CD4-positive, alpha-beta memory T cell (primary cell): ENCODE measurements at regions of chr18 and their contacts with region 1.

Region 1: DNA sequence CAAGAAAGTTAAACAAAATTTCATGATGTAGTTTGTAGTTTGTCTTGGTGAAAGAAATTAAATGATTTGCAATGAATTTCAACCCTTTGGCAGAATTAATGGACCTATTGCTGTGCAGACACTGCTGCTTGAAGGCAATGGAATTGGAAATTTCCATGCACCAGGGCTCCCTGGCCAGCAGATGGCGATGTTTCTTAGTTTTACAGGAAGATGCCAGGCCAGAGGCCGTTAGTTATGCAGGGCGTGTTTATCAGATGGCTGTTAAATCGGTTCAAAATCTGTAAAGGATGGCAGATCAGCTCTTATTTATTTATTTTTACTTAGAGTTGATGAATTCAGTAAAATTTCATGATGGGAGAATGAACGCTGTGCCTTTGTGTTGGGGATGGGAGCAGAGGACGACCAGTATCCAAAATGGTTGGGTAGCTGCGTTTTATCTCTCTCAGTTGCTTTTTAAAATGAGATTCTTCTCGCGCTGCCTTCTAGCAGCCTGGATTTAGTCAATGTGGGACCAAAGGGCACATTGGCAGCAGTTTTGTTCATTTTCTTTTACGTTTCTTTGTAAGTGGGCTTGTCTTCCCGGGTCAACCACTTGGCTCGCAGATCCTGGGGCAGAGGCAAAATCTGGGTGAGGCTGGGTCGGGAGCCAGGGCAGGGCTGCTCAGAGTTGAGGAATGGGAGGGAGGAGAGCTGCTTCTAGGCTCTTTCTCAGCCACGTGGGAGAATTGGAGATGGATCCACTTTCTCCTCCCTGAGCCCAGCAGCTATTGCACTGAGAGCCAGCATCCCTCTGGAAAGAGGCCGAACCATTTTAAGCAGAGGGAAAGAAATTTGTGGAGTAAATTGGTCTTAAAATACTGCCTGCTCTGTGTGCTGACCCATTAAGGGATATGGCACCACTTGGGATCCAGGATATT is 344.0 kb downstream of the PIK3C3 start:
- DNase-seq: peak in 4 of 5 donors; percentile 24 to 36 (median 30)
- H3K4me3 ChIP-seq: no peak overlapping the region
- H3K4me3 Mint-ChIP-seq: no peak overlapping the region
- H3K27ac ChIP-seq: no peak overlapping the region
- H3K27ac Mint-ChIP-seq: no peak overlapping the region
- H3K4me1 ChIP-seq: no peaks in the 10 kb centered on the region
- H3K4me1 Mint-ChIP-seq: peaks cover 0 to 1% (median under 1%) of the 10 kb centered on the region in 4 donors
- H3K27me3 ChIP-seq: no peaks in the 10 kb centered on the region
- H3K27me3 Mint-ChIP-seq: no peaks in the 10 kb centered on the region

Region 2: DNA sequence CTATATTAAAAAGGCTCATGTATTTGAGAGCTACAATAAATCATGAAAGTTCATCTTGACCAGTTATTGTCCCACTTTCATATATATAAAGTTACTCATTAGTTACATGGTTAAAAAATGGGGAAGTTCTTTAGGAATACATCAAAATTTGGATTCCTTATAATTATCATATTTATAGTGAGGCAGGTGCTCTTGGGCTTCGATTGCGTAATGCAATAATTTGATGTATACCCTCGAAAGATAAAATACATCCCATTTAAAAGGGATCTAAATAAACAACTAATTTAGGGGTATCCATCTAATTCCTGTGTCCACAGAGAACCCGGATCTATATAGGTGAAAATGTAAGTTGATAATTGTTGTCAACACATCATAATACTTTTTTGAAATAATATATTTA is 371.8 kb after region 1 on chr18:
- CTCF ChIA-PET with region 1: no interaction called
- POLR2A ChIA-PET with region 1: no interaction called
- intact Hi-C with region 1: no loop called
- DNase-seq: no peak
- H3K4me3 ChIP-seq: no peak overlapping the region
- H3K4me3 Mint-ChIP-seq: no peak overlapping the region
- H3K27ac ChIP-seq: no peak overlapping the region
- H3K27ac Mint-ChIP-seq: no peak overlapping the region
- H3K4me1 ChIP-seq: no peaks in the 10 kb centered on the region
- H3K4me1 Mint-ChIP-seq: no peaks in the 10 kb centered on the region
- H3K27me3 ChIP-seq: no peaks in the 10 kb centered on the region
- H3K27me3 Mint-ChIP-seq: no peaks in the 10 kb centered on the region

Region 3: DNA sequence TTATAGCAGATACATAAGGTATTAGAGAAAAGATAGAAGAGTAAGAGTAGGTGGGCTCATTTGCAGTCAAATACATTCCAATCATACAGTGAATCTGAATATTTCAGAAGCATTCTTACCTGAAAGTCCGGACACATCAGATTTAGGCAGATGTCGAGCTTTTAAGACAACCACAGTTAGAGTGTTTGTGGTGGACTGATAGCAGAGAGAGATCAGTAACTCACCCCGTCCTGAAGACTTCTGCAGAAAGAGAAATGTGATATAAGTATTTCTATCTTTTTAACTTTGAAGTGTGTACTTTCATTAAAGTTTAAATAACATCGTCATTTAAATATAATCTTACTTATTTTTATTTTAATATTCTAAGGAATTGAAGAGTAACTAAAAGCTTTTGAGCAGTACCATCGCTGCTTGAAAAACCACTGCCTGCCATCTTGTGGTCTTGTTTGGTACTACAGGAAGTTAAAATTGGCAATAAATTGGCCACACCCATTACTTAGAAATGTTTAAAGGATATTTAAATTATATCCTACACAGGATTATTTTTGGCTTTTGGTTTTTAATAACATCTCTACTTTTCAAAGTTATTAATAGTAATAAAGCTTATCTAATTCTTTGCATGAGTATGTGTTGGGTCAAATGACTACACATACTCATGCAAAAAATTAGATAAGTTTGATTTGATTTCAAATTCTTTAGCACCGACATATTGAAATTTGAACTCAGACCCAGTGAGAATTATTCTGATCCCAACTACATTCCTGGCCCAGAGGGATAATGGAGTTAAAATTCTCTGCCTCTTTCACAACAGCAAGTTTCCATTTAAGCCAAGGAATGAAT is 972.8 kb after region 1 on chr18:
- CTCF ChIA-PET with region 1: interaction called, 4 read pairs
- POLR2A ChIA-PET with region 1: no interaction called
- intact Hi-C with region 1: loop called (anchors 5 kb)
- DNase-seq: peak in 3 of 5 donors; percentile 9 to 20 (median 14)
- H3K4me3 ChIP-seq: no peak overlapping the region
- H3K4me3 Mint-ChIP-seq: no peak overlapping the region
- H3K27ac ChIP-seq: no peak overlapping the region
- H3K27ac Mint-ChIP-seq: no peak overlapping the region
- H3K4me1 ChIP-seq: no peaks in the 10 kb centered on the region
- H3K4me1 Mint-ChIP-seq: peaks cover 0 to 2% (median under 1%) of the 10 kb centered on the region in 4 donors
- H3K27me3 ChIP-seq: no peaks in the 10 kb centered on the region
- H3K27me3 Mint-ChIP-seq: peaks cover 0 to 2% of the 10 kb centered on the region in 2 donors

Region 4: GRCh38 chr18:43596105-43596712 is 1297.2 kb after region 1 on chr18:
- CTCF ChIA-PET with region 1: no interaction called
- POLR2A ChIA-PET with region 1: no interaction called
- intact Hi-C with region 1: loop called (anchors 10 kb)
- DNase-seq: no peak
- H3K4me3 ChIP-seq: no peak overlapping the region
- H3K4me3 Mint-ChIP-seq: no peak overlapping the region
- H3K27ac ChIP-seq: no peak overlapping the region
- H3K27ac Mint-ChIP-seq: no peak overlapping the region
- H3K4me1 ChIP-seq: no peaks in the 10 kb centered on the region
- H3K4me1 Mint-ChIP-seq: no peaks in the 10 kb centered on the region
- H3K27me3 ChIP-seq: no peaks in the 10 kb centered on the region
- H3K27me3 Mint-ChIP-seq: no peaks in the 10 kb centered on the region